A549 (cell line): ENCODE measurements at regions of chr2 and their contacts with region 1.

Region 1: DNA sequence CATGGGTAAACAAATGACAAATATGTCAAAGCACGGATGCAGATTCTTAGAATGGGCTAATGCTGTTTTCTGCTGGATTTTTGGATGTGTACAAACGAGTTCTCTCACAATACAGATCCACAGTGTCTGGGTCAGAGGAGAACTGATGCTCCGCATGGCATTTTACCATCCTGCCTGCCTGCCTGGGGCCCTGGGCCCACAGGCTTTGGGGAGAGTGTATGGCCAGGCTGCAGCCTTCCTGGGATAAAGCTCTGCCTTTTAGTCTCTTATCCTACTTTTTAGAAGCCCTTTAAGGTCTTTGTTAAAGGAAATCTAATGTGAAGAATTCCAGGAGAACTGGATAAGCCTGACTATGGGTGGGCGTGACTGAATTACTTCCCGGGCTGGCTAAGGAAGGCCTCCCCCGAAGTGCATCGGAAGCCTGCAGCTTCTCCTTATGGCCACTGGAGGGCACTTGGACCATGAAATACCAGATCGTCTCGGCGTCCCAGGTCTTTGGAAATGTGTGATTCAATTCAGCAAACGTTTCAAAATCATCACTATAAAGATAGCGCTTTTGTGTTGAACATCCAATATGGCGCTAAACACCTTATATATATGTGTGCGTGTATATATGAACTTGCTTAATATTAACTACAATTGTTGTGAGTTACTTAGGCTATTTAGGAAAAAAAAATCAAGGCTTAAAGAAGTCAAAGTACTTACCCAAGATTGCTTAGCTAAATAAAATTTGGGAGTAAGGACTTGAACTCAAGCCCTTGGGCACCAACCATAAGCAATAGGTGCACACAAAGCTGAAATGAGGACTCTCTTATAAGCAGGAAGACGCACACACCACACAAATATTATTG is 15.2 kb upstream of the DNPEP start:
- DNase-seq: peak; percentile 62 to 84
- ATAC-seq: peak; percentile 52 to 80; a peak in 5 of 6 replicates
- H3K4me3 ChIP-seq: no peak overlapping the region
- H3K27ac ChIP-seq: no peak overlapping the region
- H3K4me1 ChIP-seq: peaks cover 39% of the 10 kb centered on the region
- CTCF ChIP-seq: peak; percentile 87
- EP300 ChIP-seq: no peak
- POLR2A ChIP-seq: no peak
- RAD21 ChIP-seq: peak; percentile 85 to 90

Region 2: GRCh38 chr2:218993345-218994315 is 409.3 kb before region 1 on chr2 and contains the start of gene CRYBA2:
- CTCF ChIA-PET with region 1: no interaction called
- POLR2A ChIA-PET with region 1: no interaction called
- DNase-seq: no peak
- ATAC-seq: no peak
- H3K4me3 ChIP-seq: no peak within 1 kb of the TSS
- H3K27ac ChIP-seq: no peak within 1 kb of the TSS
- H3K4me1 ChIP-seq: peaks cover 10% of the 10 kb centered on the region
- CTCF ChIP-seq: no peak
- EP300 ChIP-seq: no peak
- POLR2A ChIP-seq: no peak
- RAD21 ChIP-seq: no peak
- polyA plus RNA-seq, gene CRYBA2: not detected in 2 replicates

Region 3: GRCh38 chr2:219380926-219381325 is 22.0 kb before region 1 on chr2:
- CTCF ChIA-PET with region 1: interaction called, 10 read pairs
- POLR2A ChIA-PET with region 1: no interaction called
- DNase-seq: no peak
- ATAC-seq: no peak
- H3K4me3 ChIP-seq: no peak overlapping the region
- H3K27ac ChIP-seq: no peak overlapping the region
- H3K4me1 ChIP-seq: no peaks in the 10 kb centered on the region
- CTCF ChIP-seq: no peak
- EP300 ChIP-seq: no peak
- POLR2A ChIP-seq: no peak
- RAD21 ChIP-seq: no peak

Region 4: GRCh38 chr2:219430633-219431615 is 28.0 kb after region 1 on chr2:
- CTCF ChIA-PET with region 1: interaction called, 35 read pairs
- POLR2A ChIA-PET with region 1: no interaction called
- DNase-seq: peak in 1 of 2 experiments; percentile 46
- ATAC-seq: peak; percentile 89 to 90
- H3K4me3 ChIP-seq: no peak overlapping the region
- H3K27ac ChIP-seq: 0 out of 6 replicates have a peak overlapping the region, but pooled peaks of 1 of the 2 experiments have one; percentile 12
- H3K4me1 ChIP-seq: no peaks in the 10 kb centered on the region
- CTCF ChIP-seq: peak; percentile 49
- EP300 ChIP-seq: no peak
- POLR2A ChIP-seq: no peak
- RAD21 ChIP-seq: peak; percentile 57 to 60; a peak in 4 of 5 replicates

Region 5: GRCh38 chr2:219459460-219460311 is 56.8 kb after region 1 on chr2:
- CTCF ChIA-PET with region 1: interaction called, 30 read pairs
- POLR2A ChIA-PET with region 1: no interaction called
- DNase-seq: peak; percentile 59 to 75
- ATAC-seq: peak; percentile 78 to 90
- H3K4me3 ChIP-seq: no peak overlapping the region
- H3K27ac ChIP-seq: peak overlapping the region in 1 of 2 experiments; percentile 44; a peak in 1 of 6 replicates
- H3K4me1 ChIP-seq: 0 out of 3 replicates have a peak, but pooled peaks cover 2% of the 10 kb centered on the region
- CTCF ChIP-seq: peak; percentile 70
- EP300 ChIP-seq: no peak
- POLR2A ChIP-seq: no peak
- RAD21 ChIP-seq: peak; percentile 43 to 61; a peak in 4 of 5 replicates

Region 6: GRCh38 chr2:219509780-219510511 is 107.1 kb after region 1 on chr2:
- CTCF ChIA-PET with region 1: interaction called, 14 read pairs
- POLR2A ChIA-PET with region 1: interaction called, 3 read pairs
- DNase-seq: peak in 1 of 2 experiments; percentile 63
- ATAC-seq: peak; percentile 83 to 93
- H3K4me3 ChIP-seq: peak overlapping the region; percentile 38
- H3K27ac ChIP-seq: peak overlapping the region in 1 of 2 experiments; percentile 80; a peak in 3 of 6 replicates
- H3K4me1 ChIP-seq: peaks cover 12% of the 10 kb centered on the region
- CTCF ChIP-seq: peak; percentile 65
- EP300 ChIP-seq: no peak
- POLR2A ChIP-seq: no peak
- RAD21 ChIP-seq: peak; percentile 33 to 42; a peak in 4 of 5 replicates

Region 7: DNA sequence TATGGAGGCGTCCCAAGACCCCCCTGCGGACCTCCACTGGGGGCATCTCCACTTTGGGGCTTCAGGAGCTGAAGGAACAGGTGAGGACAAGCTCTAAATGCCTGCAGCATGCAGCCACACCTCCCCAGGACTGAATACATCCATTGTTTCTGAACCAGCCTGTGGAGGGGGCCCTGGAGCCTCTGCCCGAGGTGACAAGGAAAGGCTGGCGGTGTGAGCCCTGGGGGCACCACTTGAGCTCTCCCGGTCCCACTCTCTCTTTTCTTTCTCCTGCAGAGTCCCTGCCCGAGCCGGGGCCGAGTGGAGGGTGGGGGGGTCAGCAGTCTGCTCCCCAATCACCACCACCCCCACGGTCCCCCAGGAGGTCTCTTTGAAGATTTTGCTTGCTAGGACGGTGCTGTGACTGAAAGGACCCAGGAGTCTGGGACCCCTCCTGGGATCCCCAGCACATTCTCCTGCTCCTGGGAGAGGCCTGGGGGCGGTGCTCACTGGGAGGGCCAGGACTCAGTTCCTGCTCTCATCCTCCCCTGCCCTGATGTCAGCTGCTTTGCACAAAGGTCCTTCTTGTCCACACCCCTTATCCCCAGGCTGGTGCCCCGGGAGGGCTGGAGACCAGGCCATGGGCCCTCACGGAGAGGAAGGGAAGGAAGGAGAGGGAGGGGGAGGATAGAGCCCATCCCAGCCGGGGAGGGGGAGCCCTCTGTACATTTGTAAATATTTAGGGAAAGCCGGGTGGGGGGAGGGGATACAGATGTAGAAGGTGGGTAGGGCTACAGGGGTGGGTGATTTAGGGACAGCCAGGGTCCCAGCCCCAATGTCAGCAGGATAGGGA is 135.0 kb after region 1 on chr2:
- CTCF ChIA-PET with region 1: interaction called, 362 read pairs
- POLR2A ChIA-PET with region 1: no interaction called
- DNase-seq: no peak
- ATAC-seq: no peak
- H3K4me3 ChIP-seq: no peak overlapping the region
- H3K27ac ChIP-seq: no peak overlapping the region
- H3K4me1 ChIP-seq: peaks cover 9% of the 10 kb centered on the region
- CTCF ChIP-seq: no peak
- EP300 ChIP-seq: no peak
- POLR2A ChIP-seq: no peak
- RAD21 ChIP-seq: no peak